ENCODE measurements at regions of chr7 and their contacts with region 1.

Region 1: GRCh38 chr7:25069900-25070443 is 55.1 kb downstream of the CYCS start:
- DNase-seq: peak; percentile 76
- CTCF ChIP-seq: peak; percentile 85

Region 2: DNA sequence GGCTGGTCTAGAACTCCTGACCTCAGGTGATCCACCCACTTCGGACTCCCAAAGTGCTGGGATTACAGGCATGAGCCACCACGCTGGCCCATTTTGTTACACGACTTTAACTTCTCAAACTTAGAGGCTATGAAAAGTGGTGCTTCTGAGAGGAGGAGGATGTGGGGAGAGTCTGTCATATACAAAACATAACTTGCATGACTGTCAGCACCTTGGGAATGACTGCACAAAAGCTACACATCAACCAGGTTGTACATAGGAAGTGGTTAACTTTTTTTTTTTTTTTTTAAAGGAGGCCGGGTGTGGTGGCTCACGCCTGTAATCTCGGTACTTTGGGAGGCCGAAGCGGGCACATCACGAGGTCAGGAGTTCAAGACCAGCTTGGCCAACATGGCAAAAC is 269.3 kb before region 1 on chr7:
- in situ Hi-C with region 1: loop called (anchors 10 kb)
- DNase-seq: no peak
- CTCF ChIP-seq: no peak

Region 3: DNA sequence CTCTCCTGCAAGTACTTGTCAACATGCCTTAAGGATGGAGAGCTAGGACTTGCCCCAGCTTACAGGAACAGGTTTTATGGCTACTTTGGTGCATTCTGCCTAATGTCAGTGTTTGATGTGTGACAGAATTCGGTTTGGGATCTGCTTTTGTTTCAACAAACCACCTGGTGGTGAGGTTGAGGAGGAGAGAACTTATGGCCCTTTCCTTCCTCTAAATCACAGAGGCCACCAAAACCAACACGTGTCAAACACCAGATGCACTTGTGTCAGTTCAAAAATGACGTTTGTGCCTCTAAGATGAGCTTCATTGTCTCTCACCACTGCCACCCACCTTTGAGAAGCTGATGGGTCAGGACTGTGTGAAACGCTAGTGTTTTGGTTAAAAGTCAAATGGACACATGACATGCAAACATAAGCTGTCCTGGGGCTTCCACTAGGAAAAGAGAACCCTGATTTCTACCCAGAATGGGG is 173.9 kb before region 1 on chr7:
- in situ Hi-C with region 1: no loop called
- DNase-seq: peak; percentile 71
- CTCF ChIP-seq: no peak

Region 4: DNA sequence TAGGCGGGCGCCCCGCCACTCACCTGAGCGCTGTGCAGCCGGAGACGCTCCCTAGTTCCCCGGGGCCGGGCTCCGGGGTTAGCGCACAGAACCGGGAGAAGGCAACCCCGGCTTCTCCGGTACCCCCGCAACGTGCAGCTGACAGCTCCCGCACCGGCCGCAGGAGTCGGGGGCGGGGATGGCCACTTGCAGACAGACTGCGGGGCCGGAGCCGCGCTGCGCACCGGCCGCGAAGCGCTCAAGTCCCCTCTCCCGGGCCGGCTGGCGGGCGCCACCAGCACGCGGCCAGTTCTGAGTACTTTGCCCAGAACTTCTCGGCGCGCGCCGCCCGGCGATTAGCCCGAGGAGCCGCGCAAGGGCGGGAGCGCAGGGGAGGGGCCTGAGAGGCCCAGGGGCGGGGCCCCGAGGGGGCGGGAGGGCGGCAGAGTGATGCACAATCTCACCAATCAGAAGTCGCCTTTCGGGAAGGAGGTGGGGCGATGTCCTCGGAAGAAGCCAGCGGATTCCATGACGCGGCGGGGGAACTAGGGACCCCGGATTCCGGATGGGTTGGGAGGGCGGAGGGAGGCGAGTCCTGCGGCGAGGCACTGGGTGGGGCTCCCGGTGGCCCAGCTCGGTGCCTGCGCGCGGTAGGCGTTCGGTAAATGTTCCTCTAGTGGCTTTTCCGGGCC is 90.0 kb before region 1 on chr7 and contains the start of gene OSBPL3:
- in situ Hi-C with region 1: loop called (anchors 10 kb)
- DNase-seq: peak; percentile 94
- CTCF ChIP-seq: peak; percentile 55

Measured in GM13977 (cell line).